Activated CD4-positive, alpha-beta T cell treated with anti-CD3 and anti-CD28 coated beads, Interleukin-2, amount 10 ng/mL, durations not matched to agents 24 days and 14 days (primary cell): ENCODE measurements at regions of chr19 and their contacts with region 1.

Region 1: GRCh38 chr19:54168174-54168917 is 4.6 kb downstream of the TMC4 start:
- DNase-seq: peak; percentile 97
- H3K4me3 Mint-ChIP-seq: peak overlapping the region; percentile 28
- H3K27ac Mint-ChIP-seq: no peak overlapping the region
- H3K4me1 Mint-ChIP-seq: peaks cover 14% of the 10 kb centered on the region
- H3K27me3 Mint-ChIP-seq: no peaks in the 10 kb centered on the region

Region 2: GRCh38 chr19:54077334-54077733 is 91.0 kb before region 1 on chr19:
- intact Hi-C with region 1: no loop called
- DNase-seq: no peak
- H3K4me3 Mint-ChIP-seq: no peak overlapping the region
- H3K27ac Mint-ChIP-seq: no peak overlapping the region
- H3K4me1 Mint-ChIP-seq: no peaks in the 10 kb centered on the region
- H3K27me3 Mint-ChIP-seq: no peaks in the 10 kb centered on the region

Region 3: DNA sequence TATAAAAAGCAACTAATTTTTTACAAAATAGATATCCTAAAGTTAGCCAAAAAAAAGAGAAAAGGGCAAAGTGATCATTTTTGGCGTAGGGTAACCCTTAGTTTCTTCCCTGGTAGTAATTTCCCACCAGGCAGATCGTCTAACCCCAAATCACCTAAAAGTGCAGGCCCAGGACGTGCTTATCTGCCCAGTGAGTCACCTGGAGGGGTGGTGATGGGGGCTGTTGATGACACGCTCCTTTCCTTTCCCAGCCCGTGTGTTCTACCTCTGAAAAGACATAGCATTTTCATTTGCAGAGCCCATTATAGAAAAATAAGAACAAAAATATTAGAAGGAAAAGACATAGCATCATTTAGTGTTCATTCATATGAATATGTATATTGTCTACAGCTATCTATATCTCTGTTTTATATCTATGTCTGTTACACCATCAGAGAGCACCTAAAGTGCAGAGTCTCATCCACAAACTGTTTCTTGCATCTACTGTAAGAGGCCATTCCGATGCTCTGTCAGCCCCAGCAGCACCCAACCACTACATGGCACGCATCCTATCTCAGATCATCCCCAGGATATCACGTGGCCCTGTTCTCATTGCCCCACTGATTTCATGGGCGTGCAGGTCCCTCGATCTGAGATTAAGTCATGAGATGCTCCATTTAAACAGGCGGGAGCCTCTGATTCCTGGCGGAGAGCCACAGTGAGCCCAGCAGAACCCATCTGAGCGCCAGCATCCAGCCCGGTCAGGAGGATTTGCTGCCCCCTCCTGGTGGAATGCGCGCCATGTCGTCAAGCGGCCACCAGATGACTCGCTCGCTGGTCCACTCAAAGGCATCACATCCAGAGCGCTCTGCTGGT is 63.0 kb after region 1 on chr19:
- intact Hi-C with region 1: loop called (anchors 1 kb)
- DNase-seq: peak; percentile 96
- H3K4me3 Mint-ChIP-seq: no peak overlapping the region
- H3K27ac Mint-ChIP-seq: no peak overlapping the region
- H3K4me1 Mint-ChIP-seq: peaks cover 10% of the 10 kb centered on the region
- H3K27me3 Mint-ChIP-seq: peaks cover 51% of the 10 kb centered on the region

Region 4: DNA sequence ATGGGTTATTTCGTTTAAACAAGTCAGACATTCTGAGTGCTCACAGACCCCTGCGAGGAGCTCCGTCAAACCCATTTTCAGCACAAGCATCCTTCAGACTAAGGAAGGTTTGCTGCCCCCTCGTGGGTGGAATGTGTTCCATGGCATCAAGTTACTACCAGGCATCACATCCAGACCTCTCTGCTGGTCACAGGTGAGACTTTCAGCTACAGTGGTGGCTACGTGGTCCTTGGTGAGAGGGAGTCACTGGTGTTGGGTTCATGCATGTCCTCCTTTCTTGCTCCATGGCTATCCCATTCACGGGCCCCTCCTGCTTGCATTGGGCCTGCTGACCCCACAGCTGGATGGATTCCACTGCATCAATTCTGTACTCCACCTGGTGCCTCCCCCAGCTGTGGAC is 97.8 kb after region 1 on chr19:
- intact Hi-C with region 1: loop called (anchors 1 kb)
- DNase-seq: peak; percentile 88
- H3K4me3 Mint-ChIP-seq: no peak overlapping the region
- H3K27ac Mint-ChIP-seq: no peak overlapping the region
- H3K4me1 Mint-ChIP-seq: no peaks in the 10 kb centered on the region
- H3K27me3 Mint-ChIP-seq: peaks cover 21% of the 10 kb centered on the region

Region 5: DNA sequence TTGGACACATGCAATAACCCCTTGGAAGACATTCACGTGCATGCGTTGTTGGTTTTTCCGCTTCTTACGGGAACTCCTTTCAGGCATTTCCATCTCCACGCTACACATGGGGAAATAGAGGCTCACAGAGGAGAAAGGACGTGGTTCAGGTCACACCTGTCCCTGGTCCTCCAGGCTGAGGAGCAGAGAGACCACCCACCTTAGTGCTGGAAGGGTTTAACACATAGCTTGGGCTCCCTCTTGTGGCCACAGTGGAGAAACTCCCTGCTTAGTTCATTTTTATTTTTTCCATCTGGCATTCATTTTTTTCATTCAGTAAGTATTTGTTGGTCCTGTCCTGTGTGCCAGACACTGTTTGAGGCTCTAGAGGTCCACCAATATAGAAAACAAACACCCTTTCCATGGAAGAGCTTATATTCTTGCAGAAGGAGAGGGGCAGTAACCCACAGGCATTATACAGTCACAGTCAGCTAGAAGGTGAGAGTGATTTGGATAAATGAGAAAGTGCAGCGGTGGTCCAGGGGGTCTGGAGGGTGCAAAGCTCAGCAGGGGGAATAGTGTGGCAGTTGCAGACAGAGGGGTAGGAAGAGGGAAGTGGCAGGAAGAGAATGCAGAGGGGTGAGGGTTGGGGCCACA is 222.7 kb after region 1 on chr19:
- intact Hi-C with region 1: no loop called
- DNase-seq: peak; percentile 89
- H3K4me3 Mint-ChIP-seq: peak overlapping the region; percentile 34
- H3K27ac Mint-ChIP-seq: no peak overlapping the region
- H3K4me1 Mint-ChIP-seq: peaks cover 28% of the 10 kb centered on the region
- H3K27me3 Mint-ChIP-seq: peaks cover 11% of the 10 kb centered on the region